Activated naive CD4-positive, alpha-beta T cell treated with anti-CD3 and anti-CD28 coated beads for 36 hours (primary cell): ENCODE measurements at regions of chr12 and their contacts with region 1.

Region 1: GRCh38 chr12:131608740-131609690 is 101.9 kb upstream of the SFSWAP start:
- DNase-seq: peak; percentile 78
- H3K4me3 Mint-ChIP-seq: no peak overlapping the region
- H3K27ac Mint-ChIP-seq: no peak overlapping the region
- H3K4me1 Mint-ChIP-seq: peaks cover 53% of the 10 kb centered on the region
- H3K27me3 Mint-ChIP-seq: no peaks in the 10 kb centered on the region

Region 2: DNA sequence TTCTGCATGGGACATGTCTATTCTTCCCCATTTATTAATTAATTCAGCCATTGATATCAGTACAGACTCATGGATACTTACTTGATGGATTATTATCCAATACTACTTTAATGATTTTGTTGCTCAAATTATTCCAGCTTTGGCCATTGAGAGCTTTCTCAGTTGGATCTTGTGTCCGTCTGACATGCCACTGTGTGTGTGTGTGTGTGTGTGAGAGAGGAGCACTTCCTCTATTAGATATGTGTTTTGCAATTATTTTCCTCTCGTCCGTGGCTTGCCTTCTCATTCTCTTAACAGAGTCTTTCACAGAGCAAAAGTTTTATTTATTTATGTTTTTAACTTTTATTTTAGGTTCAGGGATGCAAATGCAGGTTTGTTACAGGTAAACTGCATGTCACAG is 461.1 kb before region 1 on chr12:
- CTCF ChIA-PET with region 1: no interaction called
- intact Hi-C with region 1: no loop called
- DNase-seq: no peak
- H3K4me3 Mint-ChIP-seq: no peak overlapping the region
- H3K27ac Mint-ChIP-seq: no peak overlapping the region
- H3K4me1 Mint-ChIP-seq: no peaks in the 10 kb centered on the region
- H3K27me3 Mint-ChIP-seq: peaks cover 11% of the 10 kb centered on the region

Region 3: DNA sequence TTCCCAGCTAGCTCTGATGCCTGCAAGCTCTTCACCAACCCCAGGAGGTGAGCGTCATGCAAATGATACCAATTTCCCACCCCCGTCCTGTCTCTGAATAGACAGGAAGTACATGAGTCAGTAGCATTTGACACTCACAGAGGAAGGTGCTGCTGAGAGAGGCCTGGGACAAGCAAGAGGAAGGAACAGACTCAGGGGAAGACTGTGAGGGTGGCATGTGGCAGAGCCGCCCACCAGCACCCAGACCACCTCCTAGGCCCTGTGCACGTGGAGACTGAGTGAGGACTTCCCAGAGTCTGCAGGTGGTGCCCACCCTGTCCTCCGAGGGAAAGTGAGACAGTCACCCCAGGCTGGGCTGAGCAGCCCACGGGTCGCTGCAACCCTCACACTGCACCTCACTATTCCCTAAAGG is 97.6 kb before region 1 on chr12:
- CTCF ChIA-PET with region 1: no interaction called
- intact Hi-C with region 1: loop called (anchors 1 kb)
- DNase-seq: peak; percentile 83
- H3K4me3 Mint-ChIP-seq: no peak overlapping the region
- H3K27ac Mint-ChIP-seq: peak overlapping the region; percentile 42
- H3K4me1 Mint-ChIP-seq: peaks cover 15% of the 10 kb centered on the region
- H3K27me3 Mint-ChIP-seq: no peaks in the 10 kb centered on the region

Region 4: DNA sequence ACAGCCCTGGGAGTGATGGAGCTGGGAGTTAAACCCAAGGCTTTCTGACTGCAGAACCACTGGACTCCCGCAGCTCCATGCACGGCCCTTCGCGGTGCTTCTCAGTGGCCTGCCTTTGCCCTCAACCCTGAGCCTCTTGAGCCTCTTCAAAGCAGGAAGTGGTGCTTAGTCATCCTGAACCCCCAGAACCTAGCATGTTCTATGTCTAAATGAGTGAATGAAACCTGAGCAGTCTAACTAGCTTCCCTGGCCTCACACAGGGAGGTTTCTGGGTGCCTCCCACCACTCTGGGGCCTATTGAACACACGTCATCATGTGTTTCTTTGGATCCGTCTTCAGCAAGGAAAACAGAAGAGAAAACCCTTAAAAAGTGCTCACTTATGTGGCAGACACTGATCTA is 16.0 kb before region 1 on chr12:
- CTCF ChIA-PET with region 1: no interaction called
- intact Hi-C with region 1: loop called (anchors 2 kb)
- DNase-seq: peak; percentile 47
- H3K4me3 Mint-ChIP-seq: no peak overlapping the region
- H3K27ac Mint-ChIP-seq: peak overlapping the region; percentile 43
- H3K4me1 Mint-ChIP-seq: peaks cover 9% of the 10 kb centered on the region
- H3K27me3 Mint-ChIP-seq: no peaks in the 10 kb centered on the region

Region 5: GRCh38 chr12:131684015-131684725 is 75.2 kb after region 1 on chr12:
- CTCF ChIA-PET with region 1: no interaction called
- intact Hi-C with region 1: no loop called
- DNase-seq: no peak
- H3K4me3 Mint-ChIP-seq: no peak overlapping the region
- H3K27ac Mint-ChIP-seq: no peak overlapping the region
- H3K4me1 Mint-ChIP-seq: no peaks in the 10 kb centered on the region
- H3K27me3 Mint-ChIP-seq: no peaks in the 10 kb centered on the region

Region 6: DNA sequence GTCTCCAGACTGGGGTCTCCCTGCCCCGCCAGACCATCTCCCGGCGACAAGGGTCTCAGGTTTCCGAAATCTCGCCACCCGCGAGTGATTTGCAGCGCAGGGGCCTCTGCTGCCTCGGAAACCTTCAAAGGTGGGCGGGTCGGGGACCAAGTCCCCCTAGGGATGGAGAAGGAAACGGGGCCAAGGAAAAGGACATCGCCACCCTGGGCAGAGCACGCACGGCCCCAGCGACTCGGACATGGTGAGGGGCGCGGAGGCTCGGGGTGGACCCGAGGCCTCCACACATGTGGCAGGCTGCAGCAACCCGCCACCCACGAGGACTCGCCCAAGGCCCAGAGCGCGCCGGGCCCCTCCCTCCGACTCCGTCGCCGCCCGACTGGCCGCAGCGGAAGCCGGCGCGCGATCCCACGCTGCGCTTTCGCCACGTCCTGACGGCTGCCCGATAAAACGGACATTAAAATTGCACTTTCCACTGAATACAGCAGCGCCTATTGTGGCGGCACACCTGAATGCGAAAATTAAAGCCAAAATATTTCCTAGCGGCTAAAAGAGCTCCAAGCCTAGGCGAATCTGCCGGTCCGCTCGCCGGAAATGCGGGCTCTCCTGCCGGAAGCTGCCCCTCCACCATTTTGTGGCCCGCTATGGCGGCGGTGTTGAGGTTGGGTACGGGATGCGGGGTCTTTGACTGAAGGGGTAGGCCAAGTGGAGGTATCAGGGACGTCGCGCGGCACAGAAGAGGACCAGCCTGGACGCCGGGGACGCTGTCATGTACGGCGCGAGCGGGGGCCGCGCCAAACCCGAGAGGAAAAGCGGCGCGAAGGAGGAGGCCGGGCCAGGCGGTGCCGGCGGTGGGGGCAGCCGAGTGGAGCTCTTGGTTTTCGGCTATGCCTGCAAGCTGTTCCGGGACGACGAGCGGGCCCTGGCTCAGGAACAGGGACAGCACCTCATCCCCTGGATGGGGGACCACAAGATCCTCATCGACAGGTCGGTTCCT is 101.7 kb after region 1 on chr12 and contains the start of gene SFSWAP:
- CTCF ChIA-PET with region 1: no interaction called
- intact Hi-C with region 1: loop called (anchors 2 kb)
- DNase-seq: peak; percentile 79
- H3K4me3 Mint-ChIP-seq: peak within 1 kb of the TSS; percentile 89
- H3K27ac Mint-ChIP-seq: peak within 1 kb of the TSS; percentile 96
- H3K4me1 Mint-ChIP-seq: peaks cover 23% of the 10 kb centered on the region
- H3K27me3 Mint-ChIP-seq: no peaks in the 10 kb centered on the region
- total RNA-seq, gene SFSWAP: 51.3 TPM

Region 7: GRCh38 chr12:131776237-131776889 is 167.3 kb after region 1 on chr12:
- CTCF ChIA-PET with region 1: no interaction called
- intact Hi-C with region 1: loop called (anchors 5 kb)
- DNase-seq: peak; percentile 73
- H3K4me3 Mint-ChIP-seq: no peak overlapping the region
- H3K27ac Mint-ChIP-seq: peak overlapping the region; percentile 81
- H3K4me1 Mint-ChIP-seq: peaks cover 42% of the 10 kb centered on the region
- H3K27me3 Mint-ChIP-seq: no peaks in the 10 kb centered on the region

Region 8: GRCh38 chr12:131830335-131830913 is 221.4 kb after region 1 on chr12:
- CTCF ChIA-PET with region 1: no interaction called
- intact Hi-C with region 1: loop called (anchors 1 kb)
- DNase-seq: peak; percentile 65
- H3K4me3 Mint-ChIP-seq: peak overlapping the region; percentile 43
- H3K27ac Mint-ChIP-seq: no peak overlapping the region
- H3K4me1 Mint-ChIP-seq: peaks cover 14% of the 10 kb centered on the region
- H3K27me3 Mint-ChIP-seq: peaks cover 44% of the 10 kb centered on the region